ENCODE measurements at regions of chr1 and their contacts with region 1.

Region 1: GRCh38 chr1:201481761-201482493 is 12.9 kb upstream of the PHLDA3 start:
- DNase-seq: peak; percentile 86
- H3K4me3 Mint-ChIP-seq: peak overlapping the region; percentile 72
- H3K27ac Mint-ChIP-seq: no peak overlapping the region
- H3K4me1 Mint-ChIP-seq: peaks cover 30% of the 10 kb centered on the region
- H3K27me3 Mint-ChIP-seq: peaks cover 20% of the 10 kb centered on the region

Region 2: GRCh38 chr1:201436393-201436792 is 45.5 kb before region 1 on chr1:
- CTCF ChIA-PET with region 1: interaction called, 21 read pairs
- POLR2A ChIA-PET with region 1: no interaction called
- DNase-seq: no peak
- H3K4me3 Mint-ChIP-seq: no peak overlapping the region
- H3K27ac Mint-ChIP-seq: no peak overlapping the region
- H3K4me1 Mint-ChIP-seq: peaks cover 7% of the 10 kb centered on the region
- H3K27me3 Mint-ChIP-seq: peaks cover 30% of the 10 kb centered on the region

Region 3: GRCh38 chr1:201468844-201469511 is 12.9 kb before region 1 on chr1 and contains the start of gene PHLDA3:
- CTCF ChIA-PET with region 1: interaction called, 22 read pairs
- POLR2A ChIA-PET with region 1: no interaction called
- DNase-seq: peak; percentile 67
- H3K4me3 Mint-ChIP-seq: peak within 1 kb of the TSS; percentile 79
- H3K27ac Mint-ChIP-seq: peak within 1 kb of the TSS; percentile 89
- H3K4me1 Mint-ChIP-seq: peaks cover 18% of the 10 kb centered on the region
- H3K27me3 Mint-ChIP-seq: peaks cover 38% of the 10 kb centered on the region
- total RNA-seq, gene PHLDA3: 12.1 to 18.8 TPM

Region 4: DNA sequence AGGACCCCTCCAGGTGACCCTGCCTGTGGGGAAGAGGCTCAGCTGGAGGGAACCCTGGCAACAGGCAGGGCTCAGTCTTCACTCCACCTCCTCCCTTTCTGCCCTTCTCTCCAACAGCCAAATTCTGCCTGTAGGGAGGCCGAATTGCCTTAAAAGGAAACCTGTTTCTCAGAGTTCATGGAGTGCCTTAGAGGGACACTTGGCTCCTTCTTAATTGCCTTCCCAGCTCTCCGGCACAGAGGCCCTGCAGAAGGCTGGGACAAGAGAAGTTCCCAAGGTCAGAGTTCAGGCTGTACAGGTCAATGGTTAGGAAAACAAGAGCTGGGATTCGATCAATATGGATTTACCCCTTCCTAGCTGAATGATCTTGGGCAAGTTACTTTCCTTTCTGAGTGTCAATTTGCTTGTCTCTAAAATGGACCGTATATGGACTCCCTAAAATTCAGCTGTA is 18.8 kb after region 1 on chr1:
- CTCF ChIA-PET with region 1: interaction called, 51 read pairs
- POLR2A ChIA-PET with region 1: no interaction called
- DNase-seq: no peak
- H3K4me3 Mint-ChIP-seq: no peak overlapping the region
- H3K27ac Mint-ChIP-seq: no peak overlapping the region
- H3K4me1 Mint-ChIP-seq: peaks cover 21% of the 10 kb centered on the region
- H3K27me3 Mint-ChIP-seq: no peaks in the 10 kb centered on the region

Region 5: GRCh38 chr1:201511941-201512539 is 30.1 kb after region 1 on chr1:
- CTCF ChIA-PET with region 1: interaction called, 156 read pairs
- POLR2A ChIA-PET with region 1: interaction called, 3 read pairs
- DNase-seq: no peak
- H3K4me3 Mint-ChIP-seq: no peak overlapping the region
- H3K27ac Mint-ChIP-seq: no peak overlapping the region
- H3K4me1 Mint-ChIP-seq: peaks cover 32% of the 10 kb centered on the region
- H3K27me3 Mint-ChIP-seq: no peaks in the 10 kb centered on the region

Measured in activated CD4-positive, alpha-beta T cell treated with anti-CD3 and anti-CD28 coated beads, Interleukin-2, amount 10 ng/mL, durations not matched to agents 7 days and 5 days (primary cell).